ENCODE measurements at regions of chr2 and their contacts with region 1.

Region 1: DNA sequence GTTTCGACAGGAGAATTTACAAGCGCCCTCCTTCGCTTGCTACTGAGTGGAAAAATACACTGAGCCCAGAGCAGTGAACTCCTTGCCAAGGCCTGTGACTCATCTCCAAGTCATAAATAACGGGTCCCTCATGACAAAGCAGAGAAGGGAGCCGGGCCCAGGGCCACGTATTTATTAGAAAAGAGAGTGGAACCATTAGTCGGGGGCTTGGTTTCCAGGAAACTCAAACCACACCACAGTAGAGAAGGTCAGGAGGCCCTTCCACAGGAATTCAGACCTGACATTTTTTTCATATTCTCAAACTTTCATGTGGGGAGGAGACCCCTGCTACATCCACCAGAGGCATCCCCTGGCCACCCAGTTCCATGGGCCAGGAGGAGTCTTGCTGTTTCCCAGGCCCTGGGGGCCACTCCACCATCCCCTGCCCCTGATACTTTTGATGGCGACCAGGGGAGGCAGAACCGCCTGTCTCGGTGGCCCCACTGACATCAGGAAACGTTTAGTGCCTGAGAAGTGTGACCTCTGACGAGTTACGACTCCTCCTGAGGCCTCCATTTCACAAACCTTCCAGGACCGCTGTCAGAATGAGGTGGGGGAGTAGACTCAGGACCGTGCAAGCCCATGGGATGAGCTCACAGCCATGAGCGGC is 289.7 kb downstream of the DYSF start:
- DNase-seq: peak; percentile 58 to 90
- H3K4me3 ChIP-seq: no peak overlapping the region
- H3K27ac ChIP-seq: no peak overlapping the region
- H3K4me1 ChIP-seq: peaks cover 74% of the 10 kb centered on the region
- H3K27me3 ChIP-seq: no peaks in the 10 kb centered on the region
- CTCF ChIP-seq: no peak

Region 2: DNA sequence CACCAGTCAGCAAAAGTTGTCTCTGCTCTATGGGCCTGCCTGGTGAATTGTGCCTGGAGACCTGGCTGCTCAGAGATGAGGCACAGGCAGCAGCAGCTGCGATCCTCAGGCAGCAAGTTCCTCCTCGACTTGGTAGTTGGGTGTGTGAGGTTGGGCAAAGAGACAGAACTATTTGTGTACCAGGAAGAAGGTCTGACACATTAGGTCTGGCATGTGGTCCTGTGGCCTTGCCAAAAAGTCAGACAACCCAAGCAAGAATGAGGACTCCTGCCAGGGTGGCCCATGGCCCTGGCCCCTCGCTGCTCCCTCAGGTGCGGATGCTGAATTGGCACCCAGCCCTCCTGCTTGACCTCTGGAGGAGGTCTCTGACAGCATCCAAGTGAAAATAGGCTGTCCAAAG is 97.0 kb before region 1 on chr2:
- CTCF ChIA-PET with region 1: no interaction called
- POLR2A ChIA-PET with region 1: no interaction called
- intact Hi-C with region 1: loop called (anchors 10 kb)
- DNase-seq: peak; percentile 75 to 94
- H3K4me3 ChIP-seq: no peak overlapping the region
- H3K27ac ChIP-seq: 0 out of 2 replicates have a peak overlapping the region, but pooled peaks have one; percentile 29
- H3K4me1 ChIP-seq: peaks cover 34% of the 10 kb centered on the region
- H3K27me3 ChIP-seq: no peaks in the 10 kb centered on the region
- CTCF ChIP-seq: no peak

Region 3: GRCh38 chr2:71784734-71785473 is 41.8 kb after region 1 on chr2:
- CTCF ChIA-PET with region 1: no interaction called
- POLR2A ChIA-PET with region 1: no interaction called
- intact Hi-C with region 1: loop called (anchors 2 kb)
- DNase-seq: peak; percentile 58 to 94
- H3K4me3 ChIP-seq: no peak overlapping the region
- H3K27ac ChIP-seq: peak overlapping the region; percentile 42; the same call in 1 of the 2 replicates
- H3K4me1 ChIP-seq: peaks cover 41% of the 10 kb centered on the region
- H3K27me3 ChIP-seq: no peaks in the 10 kb centered on the region
- CTCF ChIP-seq: no peak; the same call in 1 of the 2 replicates

Region 4: DNA sequence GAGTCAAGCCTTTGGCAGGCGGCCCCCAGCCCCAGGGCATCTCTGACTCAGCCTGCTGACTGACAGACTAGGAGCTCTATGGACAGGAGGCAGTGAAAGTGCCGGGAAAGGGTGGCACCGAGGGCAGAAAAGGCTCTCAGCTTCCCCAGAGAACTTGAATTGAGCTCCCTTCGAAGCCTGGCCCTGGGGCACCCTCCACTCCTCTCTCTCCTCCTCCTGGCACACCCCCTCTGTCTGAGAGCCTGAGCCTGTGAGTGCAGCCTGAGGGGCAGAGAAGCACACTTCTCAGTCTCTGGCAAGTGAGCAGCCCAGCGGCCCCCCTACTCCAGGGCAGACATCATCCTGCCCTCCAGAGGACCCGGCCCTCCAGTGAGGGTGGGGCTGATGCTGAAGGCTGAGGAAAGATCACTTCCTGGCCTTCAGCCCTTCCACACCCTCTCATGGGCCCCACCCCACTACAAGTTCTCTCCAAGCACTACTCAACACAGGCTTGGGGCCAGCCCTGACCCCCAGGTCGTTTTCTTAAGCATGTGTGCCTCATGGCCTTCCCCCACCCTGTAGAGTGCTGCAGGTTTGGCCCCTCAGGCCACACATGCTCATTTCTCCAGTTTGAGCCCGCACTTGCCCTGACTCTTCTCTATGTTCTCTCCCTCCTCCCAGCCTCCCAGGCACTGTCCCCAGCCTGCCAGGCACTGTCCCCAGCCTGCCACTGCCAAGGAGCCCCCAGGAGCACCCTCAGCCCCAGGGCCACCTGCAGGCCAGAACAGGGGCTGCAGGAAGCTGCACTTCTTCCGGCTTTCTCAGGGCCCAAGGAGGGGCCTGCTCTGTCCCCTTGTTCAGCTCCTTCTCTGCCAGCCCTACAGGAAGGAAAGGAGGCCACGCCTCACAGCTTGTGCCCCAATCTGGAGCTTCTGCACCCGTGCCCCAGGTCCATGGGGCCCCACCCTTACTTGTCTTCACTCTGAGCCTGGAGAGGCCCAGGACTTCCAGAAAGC is 372.8 kb after region 1 on chr2:
- CTCF ChIA-PET with region 1: no interaction called
- POLR2A ChIA-PET with region 1: no interaction called
- intact Hi-C with region 1: loop called (anchors 10 kb)
- DNase-seq: peak; percentile 99
- H3K4me3 ChIP-seq: peak overlapping the region; percentile 4; the same call in 1 of the 2 replicates
- H3K27ac ChIP-seq: peak overlapping the region; percentile 80
- H3K4me1 ChIP-seq: peaks cover 34% of the 10 kb centered on the region
- H3K27me3 ChIP-seq: no peaks in the 10 kb centered on the region
- CTCF ChIP-seq: peak; percentile 84

Measured in PC-9 (cell line).